ENCODE measurements at regions of chr19 and their contacts with region 1.

Region 1: DNA sequence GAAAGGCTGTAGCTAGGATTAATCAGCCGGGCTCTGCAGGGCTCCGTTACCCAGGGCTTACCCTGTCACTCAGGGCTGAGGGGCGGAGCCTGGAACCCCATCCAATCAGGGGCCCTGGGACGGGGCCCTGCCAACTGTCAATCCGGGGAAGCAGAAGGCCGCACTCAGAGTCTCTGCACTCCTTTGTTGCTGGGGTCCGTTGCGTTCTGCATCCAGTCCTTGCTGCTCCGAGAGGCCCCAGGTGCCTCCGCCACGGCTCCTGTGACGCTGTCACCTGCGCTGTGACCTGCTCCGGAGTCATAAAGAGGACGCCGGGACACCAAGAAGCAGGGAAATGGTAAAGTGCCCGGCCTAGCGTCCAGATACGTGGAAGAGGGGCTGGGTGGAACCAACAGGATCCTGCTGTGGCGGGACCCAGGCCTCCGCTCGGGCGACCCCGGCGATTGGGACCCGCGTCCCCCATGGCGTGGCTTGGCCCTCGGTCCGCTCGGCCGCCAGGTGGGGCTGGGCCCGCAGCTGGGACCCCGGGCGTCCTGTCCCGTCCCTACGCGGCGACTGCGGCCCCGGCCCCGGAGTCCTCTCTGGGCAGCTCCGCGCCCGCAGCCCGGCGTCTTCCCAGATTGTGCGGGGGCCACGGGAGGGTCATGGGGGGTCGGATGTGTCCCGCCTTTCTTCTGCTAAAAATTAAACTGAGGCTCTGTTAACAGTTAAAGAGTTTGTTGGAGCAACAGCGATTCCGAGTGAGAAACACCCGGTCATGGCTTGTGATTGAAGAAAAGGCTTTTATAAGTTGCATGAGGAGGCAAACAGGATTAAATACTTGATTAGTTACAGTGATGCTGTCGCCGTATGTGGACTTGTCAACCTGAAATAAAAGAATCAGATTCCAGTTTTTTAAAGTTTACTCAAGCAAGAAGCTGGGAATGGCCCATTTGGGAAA is at the start of gene ZNF491:
- DNase-seq: peak; percentile 64 to 91 (median 80)
- ATAC-seq: peak; percentile 98
- H3K4me3 ChIP-seq: peak within 1 kb of the TSS; percentile 73
- H3K4me3 Mint-ChIP-seq: peak within 1 kb of the TSS; percentile 93
- H3K27ac ChIP-seq: peak within 1 kb of the TSS; percentile 17
- H3K27ac Mint-ChIP-seq: peak within 1 kb of the TSS; percentile 79
- H3K4me1 ChIP-seq: peaks cover 22% of the 10 kb centered on the region
- H3K4me1 Mint-ChIP-seq: peaks cover 22% of the 10 kb centered on the region
- H3K27me3 ChIP-seq: no peaks in the 10 kb centered on the region
- H3K27me3 Mint-ChIP-seq: no peaks in the 10 kb centered on the region
- CTCF ChIP-seq: no peak
- total RNA-seq, gene ZNF491: 0.41 to 1.1 TPM

Region 2: GRCh38 chr19:11649941-11650340 is 148.7 kb before region 1 on chr19:
- CTCF ChIA-PET with region 1: no interaction called
- POLR2A ChIA-PET with region 1: no interaction called
- intact Hi-C with region 1: no loop called
- DNase-seq: no peak
- ATAC-seq: no peak
- H3K4me3 ChIP-seq: no peak overlapping the region
- H3K4me3 Mint-ChIP-seq: no peak overlapping the region
- H3K27ac ChIP-seq: no peak overlapping the region
- H3K27ac Mint-ChIP-seq: no peak overlapping the region
- H3K4me1 ChIP-seq: no peaks in the 10 kb centered on the region
- H3K4me1 Mint-ChIP-seq: no peaks in the 10 kb centered on the region
- H3K27me3 ChIP-seq: peaks cover 3 to 4% of the 10 kb centered on the region in 2 experiments
- H3K27me3 Mint-ChIP-seq: no peaks in the 10 kb centered on the region
- CTCF ChIP-seq: no peak

Region 3: DNA sequence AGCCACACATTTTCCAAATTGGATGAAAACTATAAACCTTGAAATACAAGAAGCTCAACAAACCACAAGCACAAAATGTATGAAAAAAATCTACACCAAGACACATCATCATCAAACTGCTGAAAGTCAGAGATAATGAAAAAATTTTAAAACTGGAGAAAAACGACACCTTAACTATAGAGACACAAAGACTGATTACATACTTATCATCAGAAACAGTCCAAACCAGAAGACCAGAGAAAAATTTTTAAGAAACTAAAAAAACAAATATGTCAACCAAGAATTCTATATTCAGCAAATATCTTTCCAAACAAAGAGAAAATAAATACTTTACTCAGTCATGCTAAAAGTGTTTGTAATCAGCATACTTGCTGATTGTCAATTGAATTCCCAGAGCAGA is 51.4 kb before region 1 on chr19:
- CTCF ChIA-PET with region 1: no interaction called
- POLR2A ChIA-PET with region 1: no interaction called
- intact Hi-C with region 1: no loop called
- DNase-seq: no peak
- ATAC-seq: no peak
- H3K4me3 ChIP-seq: no peak overlapping the region
- H3K4me3 Mint-ChIP-seq: no peak overlapping the region
- H3K27ac ChIP-seq: no peak overlapping the region
- H3K27ac Mint-ChIP-seq: no peak overlapping the region
- H3K4me1 ChIP-seq: no peaks in the 10 kb centered on the region
- H3K4me1 Mint-ChIP-seq: no peaks in the 10 kb centered on the region
- H3K27me3 ChIP-seq: no peaks in the 10 kb centered on the region
- H3K27me3 Mint-ChIP-seq: peaks cover 13% of the 10 kb centered on the region
- CTCF ChIP-seq: no peak

Region 4: GRCh38 chr19:11814029-11814699 is 15.5 kb after region 1 on chr19 and contains the start of gene ZNF440:
- CTCF ChIA-PET with region 1: interaction called, 45 read pairs
- POLR2A ChIA-PET with region 1: interaction called, 8 read pairs
- intact Hi-C with region 1: loop called (anchors 1 kb)
- DNase-seq: peak; percentile 65 to 89 (median 77)
- ATAC-seq: peak; percentile 95
- H3K4me3 ChIP-seq: peak within 1 kb of the TSS; percentile 97
- H3K4me3 Mint-ChIP-seq: peak within 1 kb of the TSS; percentile 98
- H3K27ac ChIP-seq: peak within 1 kb of the TSS in 1 of 2 donors; percentile 5
- H3K27ac Mint-ChIP-seq: peak within 1 kb of the TSS; percentile 75
- H3K4me1 ChIP-seq: peaks cover 23% of the 10 kb centered on the region
- H3K4me1 Mint-ChIP-seq: peaks cover 33% of the 10 kb centered on the region
- H3K27me3 ChIP-seq: no peaks in the 10 kb centered on the region
- H3K27me3 Mint-ChIP-seq: no peaks in the 10 kb centered on the region
- CTCF ChIP-seq: no peak
- total RNA-seq, gene ZNF440: 5.8 to 6.8 TPM

Region 5: GRCh38 chr19:11924886-11925650 is 126.4 kb after region 1 on chr19 and contains the start of gene ZNF700:
- CTCF ChIA-PET with region 1: interaction called, 26 read pairs
- POLR2A ChIA-PET with region 1: interaction called, 7 read pairs
- intact Hi-C with region 1: loop called (anchors 2 kb)
- DNase-seq: peak; percentile 82 to 94 (median 89)
- ATAC-seq: peak; percentile 86
- H3K4me3 ChIP-seq: peak within 1 kb of the TSS; percentile 96
- H3K4me3 Mint-ChIP-seq: peak within 1 kb of the TSS; percentile 98
- H3K27ac ChIP-seq: peak within 1 kb of the TSS; percentile 88 to 90
- H3K27ac Mint-ChIP-seq: peak within 1 kb of the TSS; percentile 96
- H3K4me1 ChIP-seq: peaks cover 43% of the 10 kb centered on the region
- H3K4me1 Mint-ChIP-seq: peaks cover 42% of the 10 kb centered on the region
- H3K27me3 ChIP-seq: no peaks in the 10 kb centered on the region
- H3K27me3 Mint-ChIP-seq: no peaks in the 10 kb centered on the region
- CTCF ChIP-seq: no peak
- total RNA-seq, gene ZNF700: 13.2 to 14.5 TPM

Region 6: GRCh38 chr19:11987405-11988281 is 189.0 kb after region 1 on chr19:
- CTCF ChIA-PET with region 1: interaction called, 18 read pairs
- POLR2A ChIA-PET with region 1: interaction called, 15 read pairs
- intact Hi-C with region 1: loop called (anchors 1 kb)
- DNase-seq: peak; percentile 82 to 95 (median 90)
- ATAC-seq: peak; percentile 91
- H3K4me3 ChIP-seq: peak overlapping the region; percentile 100
- H3K4me3 Mint-ChIP-seq: peak overlapping the region; percentile 88
- H3K27ac ChIP-seq: peak overlapping the region; percentile 86 to 91
- H3K27ac Mint-ChIP-seq: peak overlapping the region; percentile 92
- H3K4me1 ChIP-seq: peaks cover 21% of the 10 kb centered on the region
- H3K4me1 Mint-ChIP-seq: peaks cover 34% of the 10 kb centered on the region
- H3K27me3 ChIP-seq: peaks cover 0 to 2% of the 10 kb centered on the region in 2 experiments
- H3K27me3 Mint-ChIP-seq: no peaks in the 10 kb centered on the region
- CTCF ChIP-seq: no peak

Region 7: GRCh38 chr19:12126707-12127106 is 328.0 kb after region 1 on chr19:
- CTCF ChIA-PET with region 1: interaction called, 10 read pairs
- POLR2A ChIA-PET with region 1: no interaction called
- intact Hi-C with region 1: no loop called
- DNase-seq: peak in 6 of 14 experiments; percentile 2 to 51 (median 16)
- ATAC-seq: no peak
- H3K4me3 ChIP-seq: no peak overlapping the region
- H3K4me3 Mint-ChIP-seq: no peak overlapping the region
- H3K27ac ChIP-seq: no peak overlapping the region
- H3K27ac Mint-ChIP-seq: no peak overlapping the region
- H3K4me1 ChIP-seq: no peaks in the 10 kb centered on the region
- H3K4me1 Mint-ChIP-seq: no peaks in the 10 kb centered on the region
- H3K27me3 ChIP-seq: no peaks in the 10 kb centered on the region
- H3K27me3 Mint-ChIP-seq: no peaks in the 10 kb centered on the region
- CTCF ChIP-seq: peak; percentile 56